ENCODE measurements at regions of chr16 and their contacts with region 1.

Region 1: DNA sequence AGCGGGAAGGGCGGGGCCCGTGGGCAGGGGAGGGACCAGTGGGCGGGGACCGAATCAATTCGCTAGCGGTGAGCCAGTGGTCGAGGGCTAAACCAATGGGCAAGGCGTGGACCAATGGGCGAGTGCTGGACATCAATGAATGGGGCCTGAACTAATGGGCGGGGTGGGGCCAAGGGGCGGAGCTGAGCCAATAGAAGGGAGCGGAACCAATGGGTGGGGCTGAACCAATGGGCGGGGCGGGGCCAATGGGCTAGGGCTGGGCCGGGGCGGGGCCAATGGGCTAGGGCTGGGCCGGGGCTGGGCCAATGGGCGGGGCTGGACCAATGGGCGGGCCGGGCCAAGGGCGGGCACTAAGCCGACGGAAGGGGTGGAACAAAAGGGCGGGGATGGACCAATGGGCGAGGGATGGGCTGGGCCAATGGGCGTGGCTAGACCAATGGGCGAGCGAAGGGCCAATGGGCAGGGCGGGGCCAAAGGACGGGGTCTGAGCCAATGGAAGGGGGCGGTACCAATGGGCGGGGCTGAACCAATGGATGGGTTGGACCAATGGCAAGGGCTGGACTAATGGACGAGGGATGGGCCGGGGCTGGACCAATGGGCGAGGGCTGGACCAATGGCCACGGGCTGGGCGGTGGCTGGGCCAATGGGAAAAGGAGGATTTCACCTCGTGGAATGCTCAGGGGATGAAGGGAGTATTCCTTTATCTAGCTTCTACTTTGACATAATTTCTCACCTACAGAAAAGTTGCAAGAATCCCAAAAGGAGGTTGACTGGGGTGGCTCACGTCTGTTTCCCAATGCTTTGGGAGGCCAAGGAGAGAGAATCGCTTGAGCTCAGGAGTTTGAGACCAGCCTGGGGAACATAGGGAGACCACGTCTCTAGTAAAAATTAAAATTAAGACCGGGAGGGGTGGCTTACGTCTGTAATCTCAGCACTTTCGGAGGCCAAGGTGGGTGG is 6.0 kb upstream of the FLYWCH1 start:
- H3K4me3 Mint-ChIP-seq: peak overlapping the region; percentile 79
- H3K27ac Mint-ChIP-seq: peak overlapping the region; percentile 92
- H3K4me1 Mint-ChIP-seq: peaks cover 26% of the 10 kb centered on the region
- H3K27me3 Mint-ChIP-seq: peaks cover 4% of the 10 kb centered on the region

Region 2: GRCh38 chr16:2883027-2883851 is 22.5 kb before region 1 on chr16 and contains the start of gene FLYWCH2:
- intact Hi-C with region 1: loop called (anchors 2 kb)
- H3K4me3 Mint-ChIP-seq: peak within 1 kb of the TSS; percentile 83
- H3K27ac Mint-ChIP-seq: peak within 1 kb of the TSS; percentile 94
- H3K4me1 Mint-ChIP-seq: peaks cover 15% of the 10 kb centered on the region
- H3K27me3 Mint-ChIP-seq: peaks cover 8% of the 10 kb centered on the region

Region 3: DNA sequence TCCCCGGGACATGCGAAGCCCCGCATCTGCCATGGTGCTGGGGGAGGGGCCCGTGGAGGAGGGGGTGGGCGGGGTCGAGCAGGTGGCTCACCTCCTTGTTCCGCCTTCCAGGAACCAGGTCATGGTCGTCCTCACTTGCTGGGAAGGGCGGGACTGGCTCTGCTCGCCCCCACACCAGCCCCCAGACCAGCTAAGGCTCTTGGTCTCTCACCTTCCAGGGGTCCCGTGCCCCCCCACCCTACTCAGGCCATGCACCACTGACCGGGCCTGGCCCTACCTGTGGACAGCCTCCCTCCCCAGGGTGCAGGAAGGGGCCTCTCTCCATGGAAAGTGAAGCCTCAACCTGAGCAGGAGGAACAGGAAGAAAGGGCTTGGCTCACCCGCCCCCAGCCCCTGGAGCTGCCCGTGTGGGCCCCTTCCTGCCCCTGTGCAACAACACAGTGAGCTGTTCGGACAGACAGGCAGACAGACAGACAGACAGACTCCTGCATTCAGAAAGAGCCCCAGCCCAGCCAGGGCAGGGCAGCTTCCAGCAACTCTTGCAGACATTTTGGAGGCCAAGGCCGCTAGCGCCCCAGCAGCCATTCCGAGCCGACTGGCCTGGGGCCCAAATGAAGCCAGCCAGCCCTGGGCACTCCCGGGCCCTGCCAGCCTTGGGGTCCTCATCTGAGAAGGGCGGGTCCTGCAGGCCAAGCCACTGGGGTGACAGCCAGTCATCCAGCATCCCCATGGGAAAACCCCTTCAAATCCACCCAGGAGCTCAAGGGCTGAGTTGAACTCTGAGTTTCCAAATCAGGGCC is 50.3 kb after region 1 on chr16:
- intact Hi-C with region 1: no loop called
- H3K4me3 Mint-ChIP-seq: no peak overlapping the region
- H3K27ac Mint-ChIP-seq: peak overlapping the region; percentile 8
- H3K4me1 Mint-ChIP-seq: peaks cover 15% of the 10 kb centered on the region
- H3K27me3 Mint-ChIP-seq: peaks cover 34% of the 10 kb centered on the region